ENCODE measurements at regions of chr5 and their contacts with region 1.

Region 1: GRCh38 chr5:115355777-115356381 is 59.4 kb upstream of the CCDC112 start:
- DNase-seq: no peak
- CTCF ChIP-seq: no peak

Region 2: DNA sequence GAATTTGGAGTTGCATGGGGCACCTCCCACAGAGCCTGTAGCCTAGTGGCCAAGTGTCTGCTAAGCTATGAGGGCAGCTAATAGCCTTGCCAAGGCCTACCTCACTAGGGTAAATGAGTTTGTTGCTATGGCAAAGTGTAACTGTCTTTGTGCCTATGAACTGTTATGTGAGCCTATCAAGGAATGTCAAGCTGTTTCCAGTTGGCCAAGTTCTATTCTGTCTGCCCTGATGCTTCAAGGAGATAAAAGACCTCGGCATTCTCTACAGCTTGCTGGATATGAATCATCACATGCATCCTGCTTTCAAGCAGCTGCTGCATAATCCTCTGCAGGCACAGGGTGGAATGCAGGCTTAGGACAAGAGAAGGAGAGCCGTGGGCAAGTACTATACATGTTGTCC is 10.3 kb after region 1 on chr5:
- CTCF ChIA-PET with region 1: interaction called, 10 read pairs
- POLR2A ChIA-PET with region 1: no interaction called
- DNase-seq: no peak
- CTCF ChIP-seq: no peak